BJ (cell line): ENCODE measurements at regions of chr3 and their contacts with region 1.

Region 1: GRCh38 chr3:51535146-51536019 is 3.1 kb upstream of the RAD54L2 start:
- DNase-seq: no peak
- H3K4me3 ChIP-seq: no peak overlapping the region
- H3K27me3 ChIP-seq: no peaks in the 10 kb centered on the region
- CTCF ChIP-seq: no peak

Region 2: DNA sequence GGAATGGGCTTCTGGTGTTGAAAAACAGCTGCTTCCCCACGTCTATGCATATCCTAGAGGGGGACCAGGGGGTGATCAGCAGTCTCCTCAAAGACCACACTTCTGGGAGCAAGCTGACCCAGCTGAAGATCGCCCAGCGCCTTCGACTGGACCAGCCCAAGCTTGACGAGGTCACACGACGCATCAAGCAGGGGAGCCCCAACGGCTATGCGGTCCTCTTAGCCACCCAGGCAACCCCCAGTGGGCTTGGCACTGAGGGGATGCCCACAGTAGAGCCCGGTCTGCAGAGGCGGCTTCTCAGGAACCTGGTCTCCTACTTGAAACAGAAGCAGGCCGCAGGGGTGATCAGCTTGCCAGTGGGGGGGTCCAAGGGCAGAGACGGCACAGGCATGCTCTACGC is 141.8 kb before region 1 on chr3:
- CTCF ChIA-PET with region 1: no interaction called
- POLR2A ChIA-PET with region 1: interaction called, 15 read pairs
- DNase-seq: no peak
- H3K4me3 ChIP-seq: no peak overlapping the region
- H3K27me3 ChIP-seq: no peaks in the 10 kb centered on the region
- CTCF ChIP-seq: no peak

Region 3: GRCh38 chr3:51549041-51549735 is 13.8 kb after region 1 on chr3:
- CTCF ChIA-PET with region 1: interaction called, 4 read pairs
- POLR2A ChIA-PET with region 1: interaction called, 35 read pairs
- DNase-seq: no peak
- H3K4me3 ChIP-seq: no peak overlapping the region
- H3K27me3 ChIP-seq: no peaks in the 10 kb centered on the region
- CTCF ChIP-seq: no peak